ENCODE measurements at regions of chr7 and their contacts with region 1.

Region 1: GRCh38 chr7:144835652-144836544 is at the start of gene TPK1:
- DNase-seq: peak; percentile 81 to 97 (median 90)
- ATAC-seq: peak; percentile 84
- H3K4me3 ChIP-seq: peak within 1 kb of the TSS; percentile 85
- H3K4me3 Mint-ChIP-seq: peak within 1 kb of the TSS; percentile 97
- H3K27ac ChIP-seq: peak within 1 kb of the TSS; percentile 87 to 88
- H3K27ac Mint-ChIP-seq: peak within 1 kb of the TSS; percentile 97
- H3K4me1 ChIP-seq: peaks cover 35% of the 10 kb centered on the region
- H3K4me1 Mint-ChIP-seq: peaks cover 45% of the 10 kb centered on the region
- H3K27me3 ChIP-seq: no peaks in the 10 kb centered on the region
- H3K27me3 Mint-ChIP-seq: no peaks in the 10 kb centered on the region
- CTCF ChIP-seq: no peak
- total RNA-seq, gene TPK1: 17.1 to 17.8 TPM

Region 2: DNA sequence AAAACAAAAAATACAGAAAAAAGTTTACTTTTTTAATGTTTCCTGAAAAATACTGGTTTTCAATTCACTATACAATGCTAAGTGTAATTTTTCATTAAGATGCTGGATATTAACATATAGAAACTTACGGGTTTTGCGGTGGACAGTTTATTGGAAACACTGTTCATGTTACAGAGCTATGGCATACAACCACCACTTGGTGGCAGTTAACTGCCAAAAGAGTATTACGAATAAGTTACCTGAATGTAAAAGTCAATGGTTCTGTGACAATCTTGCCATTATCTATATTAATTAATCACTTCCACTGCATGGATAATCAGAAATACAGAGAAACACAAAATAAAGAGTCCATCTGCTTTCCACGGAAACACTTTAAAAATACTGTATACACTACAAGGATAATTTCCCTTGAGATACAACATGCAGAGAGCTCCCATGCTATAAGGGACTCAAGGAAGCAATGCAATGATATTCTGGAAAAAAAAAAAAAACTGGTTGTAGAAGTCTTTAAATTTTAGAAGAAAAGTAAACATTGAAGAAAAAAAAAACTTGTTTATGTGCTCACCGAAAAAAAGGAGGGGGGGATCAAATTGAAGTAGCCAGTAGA is 97.1 kb before region 1 on chr7:
- CTCF ChIA-PET with region 1: interaction called, 6 read pairs
- POLR2A ChIA-PET with region 1: interaction called, 58 read pairs
- intact Hi-C with region 1: loop called in 1 of 2 experiments (anchors 10 kb)
- DNase-seq: peak in 8 of 14 experiments; percentile 1 to 66 (median 22)
- ATAC-seq: peak; percentile 65
- H3K4me3 ChIP-seq: no peak overlapping the region
- H3K4me3 Mint-ChIP-seq: no peak overlapping the region
- H3K27ac ChIP-seq: no peak overlapping the region
- H3K27ac Mint-ChIP-seq: no peak overlapping the region
- H3K4me1 ChIP-seq: no peaks in the 10 kb centered on the region
- H3K4me1 Mint-ChIP-seq: peaks cover 8% of the 10 kb centered on the region
- H3K27me3 ChIP-seq: no peaks in the 10 kb centered on the region
- H3K27me3 Mint-ChIP-seq: no peaks in the 10 kb centered on the region
- CTCF ChIP-seq: peak; percentile 87

Region 3: GRCh38 chr7:144786522-144786921 is 49.4 kb before region 1 on chr7:
- CTCF ChIA-PET with region 1: interaction called, 10 read pairs
- POLR2A ChIA-PET with region 1: interaction called, 54 read pairs
- intact Hi-C with region 1: no loop called
- DNase-seq: peak in 4 of 14 experiments; percentile 24 to 54 (median 43)
- ATAC-seq: no peak
- H3K4me3 ChIP-seq: no peak overlapping the region
- H3K4me3 Mint-ChIP-seq: no peak overlapping the region
- H3K27ac ChIP-seq: no peak overlapping the region
- H3K27ac Mint-ChIP-seq: no peak overlapping the region
- H3K4me1 ChIP-seq: no peaks in the 10 kb centered on the region
- H3K4me1 Mint-ChIP-seq: peaks cover 20% of the 10 kb centered on the region
- H3K27me3 ChIP-seq: no peaks in the 10 kb centered on the region
- H3K27me3 Mint-ChIP-seq: no peaks in the 10 kb centered on the region
- CTCF ChIP-seq: peak; percentile 55

Region 4: GRCh38 chr7:144805627-144806239 is 30.2 kb before region 1 on chr7:
- CTCF ChIA-PET with region 1: no interaction called
- POLR2A ChIA-PET with region 1: interaction called, 244 read pairs
- intact Hi-C with region 1: loop called in 1 of 2 experiments (anchors 5 kb)
- DNase-seq: no peak
- ATAC-seq: no peak
- H3K4me3 ChIP-seq: no peak overlapping the region
- H3K4me3 Mint-ChIP-seq: no peak overlapping the region
- H3K27ac ChIP-seq: no peak overlapping the region
- H3K27ac Mint-ChIP-seq: no peak overlapping the region
- H3K4me1 ChIP-seq: no peaks in the 10 kb centered on the region
- H3K4me1 Mint-ChIP-seq: peaks cover 79% of the 10 kb centered on the region
- H3K27me3 ChIP-seq: no peaks in the 10 kb centered on the region
- H3K27me3 Mint-ChIP-seq: no peaks in the 10 kb centered on the region
- CTCF ChIP-seq: no peak

Region 5: GRCh38 chr7:144818511-144818910 is 17.4 kb before region 1 on chr7:
- CTCF ChIA-PET with region 1: interaction called, 4 read pairs
- POLR2A ChIA-PET with region 1: interaction called, 302 read pairs
- intact Hi-C with region 1: loop called (anchors 1 kb)
- DNase-seq: peak; percentile 36 to 89 (median 50)
- ATAC-seq: peak; percentile 97
- H3K4me3 ChIP-seq: no peak overlapping the region
- H3K4me3 Mint-ChIP-seq: peak overlapping the region; percentile 66
- H3K27ac ChIP-seq: peak overlapping the region; percentile 65 to 76
- H3K27ac Mint-ChIP-seq: peak overlapping the region; percentile 92
- H3K4me1 ChIP-seq: peaks cover 39% of the 10 kb centered on the region
- H3K4me1 Mint-ChIP-seq: peaks cover 91% of the 10 kb centered on the region
- H3K27me3 ChIP-seq: no peaks in the 10 kb centered on the region
- H3K27me3 Mint-ChIP-seq: no peaks in the 10 kb centered on the region
- CTCF ChIP-seq: no peak

Region 6: GRCh38 chr7:144936314-144936713 is 100.4 kb after region 1 on chr7:
- CTCF ChIA-PET with region 1: no interaction called
- POLR2A ChIA-PET with region 1: no interaction called
- intact Hi-C with region 1: no loop called
- DNase-seq: no peak
- ATAC-seq: no peak
- H3K4me3 ChIP-seq: no peak overlapping the region
- H3K4me3 Mint-ChIP-seq: no peak overlapping the region
- H3K27ac ChIP-seq: no peak overlapping the region
- H3K27ac Mint-ChIP-seq: no peak overlapping the region
- H3K4me1 ChIP-seq: no peaks in the 10 kb centered on the region
- H3K4me1 Mint-ChIP-seq: no peaks in the 10 kb centered on the region
- H3K27me3 ChIP-seq: no peaks in the 10 kb centered on the region
- H3K27me3 Mint-ChIP-seq: no peaks in the 10 kb centered on the region
- CTCF ChIP-seq: no peak